Activated B cell treated with CpG ODN at 0.5 μM for 24 hours (primary cell): ENCODE measurements at regions of chrX and their contacts with region 1.

Region 1: DNA sequence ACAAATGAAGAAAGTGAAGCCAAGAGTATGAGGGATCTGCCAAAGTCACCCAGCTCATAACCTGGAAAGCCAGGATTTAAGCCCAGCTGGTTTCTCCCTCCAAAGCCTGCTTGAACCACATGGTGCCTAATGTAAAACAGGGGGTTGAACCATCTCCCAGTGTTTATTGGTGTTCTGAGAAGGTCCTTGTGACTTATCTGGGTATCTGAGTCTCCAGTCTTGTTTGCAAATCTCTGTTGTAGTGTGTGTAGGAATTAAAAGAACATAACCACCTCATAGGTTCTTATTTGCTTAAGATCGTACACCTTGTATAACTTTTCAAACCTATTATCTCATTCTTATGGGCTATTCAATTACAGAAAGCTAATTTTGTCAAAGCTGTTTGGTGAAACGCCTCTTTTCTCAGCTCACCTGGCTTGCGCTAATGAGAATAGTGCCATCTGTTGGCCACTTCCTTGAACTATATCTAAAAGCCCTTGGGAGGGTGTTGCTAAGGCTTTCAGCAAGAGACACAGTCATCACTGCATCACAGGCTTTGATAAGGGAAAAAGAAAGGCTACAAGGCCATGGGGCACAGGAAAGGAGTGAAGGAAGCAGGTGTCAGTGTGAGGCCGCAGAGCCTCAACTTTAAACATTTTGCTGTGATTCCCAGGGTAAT is 34.0 kb downstream of the ETDB start:
- DNase-seq: no peak
- ATAC-seq: peak; percentile 93
- H3K4me3 Mint-ChIP-seq: no peak overlapping the region
- H3K27ac Mint-ChIP-seq: no peak overlapping the region
- H3K4me1 Mint-ChIP-seq: peaks cover 6% of the 10 kb centered on the region
- H3K27me3 Mint-ChIP-seq: no peaks in the 10 kb centered on the region
- CTCF ChIP-seq: no peak

Region 2: GRCh38 chrX:134484039-134484438 is 602.3 kb before region 1 on chrX:
- CTCF ChIA-PET with region 1: no interaction called
- POLR2A ChIA-PET with region 1: no interaction called
- intact Hi-C with region 1: loop called (anchors 10 kb)
- DNase-seq: no peak
- ATAC-seq: no peak
- H3K4me3 Mint-ChIP-seq: no peak overlapping the region
- H3K27ac Mint-ChIP-seq: no peak overlapping the region
- H3K4me1 Mint-ChIP-seq: no peaks in the 10 kb centered on the region
- H3K27me3 Mint-ChIP-seq: no peaks in the 10 kb centered on the region
- CTCF ChIP-seq: peak; percentile 24

Region 3: DNA sequence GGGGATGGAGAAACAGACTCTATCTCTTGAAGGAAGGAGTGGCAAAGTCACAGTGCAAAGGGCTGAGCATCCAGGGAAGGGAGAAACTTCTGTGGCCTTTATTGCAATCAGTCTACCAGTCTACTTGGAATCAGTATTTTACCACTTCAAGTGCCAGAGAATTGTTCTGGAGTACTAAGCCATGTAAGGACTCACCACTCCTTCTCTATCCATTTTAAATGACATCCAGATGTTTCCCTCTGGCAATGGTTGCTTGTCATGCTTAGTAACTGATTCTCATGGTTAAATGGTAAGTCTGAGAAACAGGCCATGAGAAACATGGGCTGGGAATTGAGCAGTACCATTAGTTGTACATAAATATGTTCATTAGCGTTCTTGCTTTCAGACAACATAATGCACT is 116.6 kb before region 1 on chrX:
- CTCF ChIA-PET with region 1: interaction called, 7 read pairs
- POLR2A ChIA-PET with region 1: no interaction called
- intact Hi-C with region 1: loop called (anchors 1 kb)
- DNase-seq: no peak
- ATAC-seq: no peak
- H3K4me3 Mint-ChIP-seq: no peak overlapping the region
- H3K27ac Mint-ChIP-seq: no peak overlapping the region
- H3K4me1 Mint-ChIP-seq: no peaks in the 10 kb centered on the region
- H3K27me3 Mint-ChIP-seq: peaks cover 3% of the 10 kb centered on the region
- CTCF ChIP-seq: no peak

Region 4: DNA sequence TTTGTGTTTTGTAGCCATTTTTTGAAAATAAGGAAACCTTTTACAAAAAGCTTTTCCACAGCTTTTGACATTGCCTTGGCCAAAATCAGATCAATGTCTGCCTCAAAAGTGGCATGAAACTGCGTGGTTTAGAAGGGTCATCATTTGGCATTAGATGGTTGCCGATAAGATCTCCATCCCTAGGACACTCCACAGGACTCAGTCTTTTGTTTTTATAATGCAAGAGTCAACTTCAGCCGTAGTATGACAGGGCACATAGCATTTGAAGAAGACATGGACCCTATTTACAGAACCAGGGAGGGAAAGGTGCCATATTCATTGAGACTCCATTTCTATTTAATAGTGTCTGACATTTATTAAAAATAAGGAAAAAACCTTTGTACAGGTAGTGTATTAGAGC is 35.7 kb before region 1 on chrX:
- CTCF ChIA-PET with region 1: interaction called, 6 read pairs
- POLR2A ChIA-PET with region 1: no interaction called
- intact Hi-C with region 1: loop called (anchors 1 kb)
- DNase-seq: no peak
- ATAC-seq: no peak
- H3K4me3 Mint-ChIP-seq: peak overlapping the region; percentile 88
- H3K27ac Mint-ChIP-seq: no peak overlapping the region
- H3K4me1 Mint-ChIP-seq: peaks cover 15% of the 10 kb centered on the region
- H3K27me3 Mint-ChIP-seq: no peaks in the 10 kb centered on the region
- CTCF ChIP-seq: no peak

Region 5: GRCh38 chrX:135185795-135186443 is 99.6 kb after region 1 on chrX:
- CTCF ChIA-PET with region 1: interaction called, 4 read pairs
- POLR2A ChIA-PET with region 1: no interaction called
- intact Hi-C with region 1: loop called (anchors 1 kb)
- DNase-seq: no peak
- ATAC-seq: peak; percentile 70
- H3K4me3 Mint-ChIP-seq: no peak overlapping the region
- H3K27ac Mint-ChIP-seq: no peak overlapping the region
- H3K4me1 Mint-ChIP-seq: no peaks in the 10 kb centered on the region
- H3K27me3 Mint-ChIP-seq: peaks cover 14% of the 10 kb centered on the region
- CTCF ChIP-seq: no peak

Region 6: GRCh38 chrX:135315864-135316263 is 229.5 kb after region 1 on chrX:
- CTCF ChIA-PET with region 1: no interaction called
- POLR2A ChIA-PET with region 1: no interaction called
- intact Hi-C with region 1: no loop called
- DNase-seq: no peak
- ATAC-seq: no peak
- H3K4me3 Mint-ChIP-seq: no peak overlapping the region
- H3K27ac Mint-ChIP-seq: no peak overlapping the region
- H3K4me1 Mint-ChIP-seq: peaks cover 42% of the 10 kb centered on the region
- H3K27me3 Mint-ChIP-seq: no peaks in the 10 kb centered on the region
- CTCF ChIP-seq: no peak